ENCODE measurements at regions of chr16 and their contacts with region 1.

Region 1: GRCh38 chr16:22948603-22949368 is 134.8 kb downstream of the HS3ST2 start:
- DNase-seq: peak in 4 of 5 donors; percentile 41 to 62 (median 56)
- ATAC-seq: peak; percentile 71 to 84 (median 78)
- H3K4me3 ChIP-seq: peak overlapping the region in 9 of 12 donors; percentile 9 to 41 (median 23)
- H3K27ac ChIP-seq: no peak overlapping the region
- H3K4me1 ChIP-seq: peaks cover 0 to 13% (median 9%) of the 10 kb centered on the region in 12 donors
- H3K27me3 ChIP-seq: peaks cover 0 to 35% (median 16%) of the 10 kb centered on the region in 9 donors
- CTCF ChIP-seq: peak; percentile 60 to 87 (median 74)
- POLR2A ChIP-seq: no peak

Region 2: DNA sequence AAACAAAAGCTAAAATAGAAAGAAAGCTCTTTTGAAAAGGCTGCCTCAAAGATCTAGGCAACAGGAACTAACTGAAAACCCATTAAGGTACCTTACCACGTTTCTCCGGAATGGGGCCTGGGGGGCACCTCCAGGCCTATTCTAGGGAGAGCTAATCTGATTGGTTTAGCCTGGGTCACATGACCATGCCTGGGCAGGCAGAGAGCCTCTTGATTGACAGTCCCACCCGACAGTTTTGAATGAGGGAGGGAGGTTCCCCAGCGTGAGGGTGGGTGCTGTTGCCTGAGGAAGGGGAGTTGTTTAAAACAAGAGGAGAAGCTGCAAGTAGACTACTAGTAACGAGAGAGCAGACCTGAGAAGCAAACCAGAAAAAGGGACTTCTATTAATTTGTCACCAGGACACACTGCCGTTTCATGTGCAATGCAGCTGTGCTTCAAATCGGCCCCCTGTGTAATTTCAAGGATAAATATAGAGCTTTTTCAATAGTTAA is 278.2 kb before region 1 on chr16:
- intact Hi-C with region 1: loop called in 3 of 10 experiments (anchors 5 to 10 kb)
- DNase-seq: peak in 1 of 5 donors; percentile 19
- ATAC-seq: no peak
- H3K4me3 ChIP-seq: no peak overlapping the region
- H3K27ac ChIP-seq: no peak overlapping the region
- H3K4me1 ChIP-seq: peaks cover 0 to 20% (median 0%) of the 10 kb centered on the region in 12 donors
- H3K27me3 ChIP-seq: peaks cover 0 to 10% (median 2%) of the 10 kb centered on the region in 9 donors
- CTCF ChIP-seq: no peak
- POLR2A ChIP-seq: no peak

Region 3: DNA sequence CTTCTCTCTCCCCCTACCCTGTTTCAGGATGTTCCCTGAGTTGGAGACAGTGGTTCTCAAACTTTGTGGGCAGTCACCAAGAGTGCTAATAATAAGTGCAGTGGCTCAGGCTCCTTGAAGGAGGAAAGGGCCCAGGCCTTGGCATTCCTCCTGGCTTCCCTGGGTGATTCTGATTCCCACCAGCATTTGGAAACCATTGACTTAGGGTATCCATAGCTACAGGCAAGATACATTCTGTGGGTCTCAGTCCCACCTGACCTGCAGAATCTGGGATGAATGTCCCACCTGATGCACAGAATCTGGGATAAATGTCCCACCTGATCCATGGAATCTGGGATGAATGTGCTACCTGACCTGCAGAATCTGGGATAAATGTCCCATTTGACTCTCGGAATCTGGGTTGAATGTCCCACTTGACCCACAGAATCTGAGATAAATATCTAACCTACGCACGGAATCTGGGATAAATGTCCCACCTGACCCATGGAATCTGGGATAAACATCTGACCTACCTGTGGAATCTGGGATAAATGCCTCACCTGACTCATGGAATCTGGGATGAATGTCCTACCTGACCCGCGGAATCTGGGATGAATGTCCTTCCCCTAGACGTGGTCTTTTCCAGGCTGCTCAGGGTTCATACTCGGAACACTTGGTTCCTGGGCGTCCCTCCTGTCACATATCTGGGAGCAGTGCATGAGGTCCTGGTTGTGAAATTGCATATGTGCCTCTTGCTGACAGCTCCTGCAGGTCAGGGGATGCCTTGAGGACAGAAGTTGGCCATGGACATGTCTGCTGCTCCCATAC is 271.6 kb before region 1 on chr16:
- intact Hi-C with region 1: loop called in 3 of 10 experiments (anchors 5 to 10 kb)
- DNase-seq: peak in 2 of 5 donors; percentile 15 to 56
- ATAC-seq: peak in 1 of 4 donors; percentile 31
- H3K4me3 ChIP-seq: no peak overlapping the region
- H3K27ac ChIP-seq: no peak overlapping the region
- H3K4me1 ChIP-seq: peaks cover 0 to 16% (median 0%) of the 10 kb centered on the region in 12 donors
- H3K27me3 ChIP-seq: peaks cover 0 to 18% (median 0%) of the 10 kb centered on the region in 9 donors
- CTCF ChIP-seq: no peak
- POLR2A ChIP-seq: no peak

Region 4: DNA sequence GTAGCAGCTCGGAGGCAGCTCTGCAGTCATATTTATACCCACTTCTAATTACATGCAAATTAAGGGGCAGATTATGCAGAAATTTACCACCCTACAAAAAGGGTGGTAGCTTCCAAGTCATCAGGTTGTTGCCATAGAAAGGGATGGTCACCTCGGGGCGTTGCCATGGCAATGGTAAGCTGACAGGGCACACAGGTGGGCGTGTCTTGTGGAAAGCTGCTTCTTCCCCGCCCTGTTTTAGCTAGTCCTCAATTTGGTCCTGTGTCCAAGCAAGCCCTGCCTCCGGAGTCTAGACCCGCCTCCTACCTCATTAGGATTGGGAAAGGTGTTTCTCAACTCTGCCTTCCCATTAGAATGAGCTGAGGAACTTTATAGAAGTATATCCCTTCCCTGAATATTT is 36.1 kb before region 1 on chr16:
- intact Hi-C with region 1: no loop called
- DNase-seq: no peak
- ATAC-seq: no peak
- H3K4me3 ChIP-seq: no peak overlapping the region
- H3K27ac ChIP-seq: no peak overlapping the region
- H3K4me1 ChIP-seq: no peaks in the 10 kb centered on the region
- H3K27me3 ChIP-seq: peaks cover 0 to 3% (median 0%) of the 10 kb centered on the region in 9 donors
- CTCF ChIP-seq: no peak
- POLR2A ChIP-seq: no peak

Region 5: DNA sequence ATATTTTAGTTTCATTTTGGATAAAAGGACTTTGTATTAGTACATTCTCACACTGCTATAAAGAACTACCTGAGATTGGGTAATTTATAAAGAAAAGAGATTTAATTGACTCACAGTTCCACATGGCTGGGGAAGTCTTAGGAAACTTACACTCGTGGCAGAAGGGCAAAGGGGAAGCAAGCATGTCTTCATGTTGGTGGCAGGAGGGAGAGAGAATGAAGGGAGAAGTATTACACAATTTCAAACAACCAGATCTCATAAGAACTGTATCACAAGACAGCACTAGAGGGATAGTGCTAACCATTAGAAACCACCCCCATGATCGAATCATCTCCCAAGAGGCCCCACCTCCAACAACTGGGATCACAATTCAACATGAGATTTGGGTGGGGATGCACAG is 57.6 kb after region 1 on chr16:
- intact Hi-C with region 1: no loop called
- DNase-seq: no peak
- ATAC-seq: no peak
- H3K4me3 ChIP-seq: no peak overlapping the region
- H3K27ac ChIP-seq: no peak overlapping the region
- H3K4me1 ChIP-seq: no peaks in the 10 kb centered on the region
- H3K27me3 ChIP-seq: peaks cover 0 to 17% (median 0%) of the 10 kb centered on the region in 9 donors
- CTCF ChIP-seq: no peak
- POLR2A ChIP-seq: no peak

Region 6: DNA sequence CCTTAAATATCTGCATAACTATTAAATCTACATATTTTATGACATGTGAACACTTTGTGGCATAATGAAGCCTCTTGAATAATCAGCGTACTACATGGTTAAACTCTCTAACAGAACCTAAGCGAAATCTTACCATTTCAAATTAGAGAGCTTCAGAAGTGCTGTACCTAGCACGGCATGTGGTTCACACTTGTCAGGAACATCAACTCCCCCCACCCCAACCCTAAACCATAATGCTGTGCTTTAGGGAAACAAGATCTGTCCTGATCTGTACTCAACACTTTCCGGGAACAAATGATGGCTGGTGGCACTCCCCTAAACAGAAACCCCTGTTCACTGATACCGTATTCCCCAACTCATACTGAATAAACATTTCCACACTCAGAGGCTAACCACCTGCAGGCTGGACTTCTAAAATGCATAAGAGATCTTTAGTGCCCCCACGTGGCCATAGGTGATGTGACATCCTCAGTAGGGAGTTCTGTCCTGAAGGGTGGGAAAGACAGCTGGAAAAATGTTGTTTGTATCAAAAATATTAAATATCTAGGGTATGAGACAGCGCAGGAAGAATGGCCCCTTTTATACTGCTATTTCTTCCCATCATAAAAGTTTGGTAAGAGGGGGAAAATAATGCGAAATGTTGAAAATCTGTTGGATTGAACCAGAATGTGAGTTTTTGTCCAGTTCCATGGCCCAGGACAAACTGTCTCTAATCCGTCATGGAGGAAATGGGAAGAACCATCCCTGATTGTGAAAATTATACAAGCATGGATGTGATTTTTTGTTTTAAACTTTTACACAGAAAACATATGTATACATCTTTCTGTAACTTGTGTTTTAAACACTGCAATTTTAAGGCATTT is 111.9 kb after region 1 on chr16:
- intact Hi-C with region 1: loop called in 1 of 10 experiments (anchors 10 kb)
- DNase-seq: peak in 4 of 5 donors; percentile 57 to 73 (median 60)
- ATAC-seq: peak; percentile 57 to 84 (median 79)
- H3K4me3 ChIP-seq: no peak overlapping the region
- H3K27ac ChIP-seq: no peak overlapping the region
- H3K4me1 ChIP-seq: peaks cover 0 to 14% (median 5%) of the 10 kb centered on the region in 12 donors
- H3K27me3 ChIP-seq: peaks cover 0 to 3% (median 0%) of the 10 kb centered on the region in 9 donors
- CTCF ChIP-seq: peak; percentile 70 to 87 (median 82)
- POLR2A ChIP-seq: no peak